ENCODE measurements at regions of chr4 and their contacts with region 1.

Region 1: DNA sequence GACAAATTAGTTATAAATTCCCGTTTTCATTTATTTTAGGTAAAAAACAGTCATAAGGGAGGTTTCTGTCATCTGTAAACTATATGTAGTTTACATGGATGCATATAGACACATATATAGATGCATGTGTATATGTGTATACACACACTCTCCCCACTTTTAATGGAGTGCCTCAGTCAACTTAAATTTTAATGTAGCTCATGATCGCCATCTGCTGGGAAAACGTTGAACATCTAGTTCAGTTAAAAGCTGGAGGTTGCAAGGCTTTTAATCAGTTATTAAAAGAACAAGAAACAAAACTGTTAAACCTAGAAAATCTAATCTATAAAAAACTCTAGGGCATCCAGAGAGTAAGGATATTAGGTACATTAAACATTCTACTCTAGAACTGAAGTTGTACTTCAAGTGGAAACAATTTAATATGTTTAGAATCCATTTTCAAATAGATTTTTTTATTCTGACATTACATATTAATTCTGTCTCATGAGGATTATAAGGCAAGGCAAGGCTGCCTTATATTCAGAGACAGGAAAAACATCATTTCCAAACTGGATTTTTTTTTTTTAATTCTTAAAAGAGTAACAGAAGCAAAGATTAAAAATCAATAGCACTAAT is 122.6 kb downstream of the SHISA3 start:
- DNase-seq: no peak
- ATAC-seq: peak; percentile 51

Region 2: DNA sequence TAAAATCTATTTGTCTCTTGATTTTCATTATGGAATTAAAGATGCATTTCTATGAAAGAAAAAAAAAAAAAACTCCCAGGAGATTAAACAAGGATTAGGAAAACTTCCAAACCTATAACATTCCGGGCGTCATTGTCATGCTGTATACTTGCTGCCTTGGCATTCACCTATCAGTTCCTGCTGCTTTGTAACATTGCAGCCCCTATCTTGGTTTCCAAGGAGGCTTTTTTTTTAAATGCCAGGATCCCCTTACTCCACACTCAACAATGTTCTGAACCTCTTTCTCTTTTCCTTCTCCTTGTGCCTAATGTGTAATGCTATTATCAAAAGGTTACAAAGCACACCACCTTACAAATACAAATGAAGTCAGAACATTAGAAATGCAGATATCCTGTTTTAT is 347.0 kb before region 1 on chr4:
- intact Hi-C with region 1: no loop called
- DNase-seq: no peak
- ATAC-seq: no peak

Region 3: GRCh38 chr4:42282081-42282901 is 237.6 kb before region 1 on chr4:
- intact Hi-C with region 1: loop called (anchors 5 kb)
- DNase-seq: no peak
- ATAC-seq: peak; percentile 98

Region 4: GRCh38 chr4:42371306-42372252 is 148.3 kb before region 1 on chr4:
- intact Hi-C with region 1: loop called (anchors 5 kb)
- DNase-seq: no peak
- ATAC-seq: peak; percentile 61

Measured in Right ventricle myocardium superior (tissue), 1 donor.